HepG2 (cell line): ENCODE measurements at regions of chr2 and their contacts with region 1.

Region 1: GRCh38 chr2:100882645-100883613 is 63.0 kb downstream of the NPAS2 start:
- DNase-seq: peak; percentile 96
- ATAC-seq: peak; percentile 89
- H3K4me3 ChIP-seq: no peak overlapping the region
- H3K27ac ChIP-seq: peak overlapping the region; percentile 83
- H3K4me1 ChIP-seq: peaks cover 73% of the 10 kb centered on the region
- H3K27me3 ChIP-seq: no peaks in the 10 kb centered on the region
- CTCF ChIP-seq: no peak
- EP300 ChIP-seq: peak; percentile 82 to 90
- POLR2A ChIP-seq: peak in 1 of 2 experiments; percentile 33; a peak in 1 of 4 replicates
- RAD21 ChIP-seq: no peak

Region 2: GRCh38 chr2:100807707-100808106 is 75.2 kb before region 1 on chr2:
- CTCF ChIA-PET with region 1: no interaction called
- POLR2A ChIA-PET with region 1: no interaction called
- in situ Hi-C with region 1: no loop called
- intact Hi-C with region 1: no loop called
- DNase-seq: no peak
- ATAC-seq: no peak; the same call in 2 of the 3 replicates
- H3K4me3 ChIP-seq: no peak overlapping the region
- H3K27ac ChIP-seq: no peak overlapping the region
- H3K4me1 ChIP-seq: peaks cover 9% of the 10 kb centered on the region; the same call in 1 of the 2 replicates
- H3K27me3 ChIP-seq: peaks cover 2 to 25% of the 10 kb centered on the region in 2 experiments; a peak in 3 of 5 replicates
- CTCF ChIP-seq: no peak
- EP300 ChIP-seq: no peak
- POLR2A ChIP-seq: no peak
- RAD21 ChIP-seq: no peak

Region 3: GRCh38 chr2:100818606-100819369 is 64.1 kb before region 1 on chr2:
- CTCF ChIA-PET with region 1: no interaction called
- POLR2A ChIA-PET with region 1: interaction called, 6 read pairs
- in situ Hi-C with region 1: loop called (anchors 5 kb)
- intact Hi-C with region 1: no loop called
- DNase-seq: peak; percentile 78
- ATAC-seq: peak; percentile 71
- H3K4me3 ChIP-seq: peak overlapping the region; percentile 76 to 96 (median 87)
- H3K27ac ChIP-seq: peak overlapping the region; percentile 65
- H3K4me1 ChIP-seq: peaks cover 71% of the 10 kb centered on the region
- H3K27me3 ChIP-seq: no peaks in the 10 kb centered on the region; a peak in 1 of 5 replicates
- CTCF ChIP-seq: peak; percentile 81
- EP300 ChIP-seq: no peak; a peak in 1 of 4 replicates
- POLR2A ChIP-seq: peak; percentile 69 to 70
- RAD21 ChIP-seq: peak; percentile 85

Region 4: DNA sequence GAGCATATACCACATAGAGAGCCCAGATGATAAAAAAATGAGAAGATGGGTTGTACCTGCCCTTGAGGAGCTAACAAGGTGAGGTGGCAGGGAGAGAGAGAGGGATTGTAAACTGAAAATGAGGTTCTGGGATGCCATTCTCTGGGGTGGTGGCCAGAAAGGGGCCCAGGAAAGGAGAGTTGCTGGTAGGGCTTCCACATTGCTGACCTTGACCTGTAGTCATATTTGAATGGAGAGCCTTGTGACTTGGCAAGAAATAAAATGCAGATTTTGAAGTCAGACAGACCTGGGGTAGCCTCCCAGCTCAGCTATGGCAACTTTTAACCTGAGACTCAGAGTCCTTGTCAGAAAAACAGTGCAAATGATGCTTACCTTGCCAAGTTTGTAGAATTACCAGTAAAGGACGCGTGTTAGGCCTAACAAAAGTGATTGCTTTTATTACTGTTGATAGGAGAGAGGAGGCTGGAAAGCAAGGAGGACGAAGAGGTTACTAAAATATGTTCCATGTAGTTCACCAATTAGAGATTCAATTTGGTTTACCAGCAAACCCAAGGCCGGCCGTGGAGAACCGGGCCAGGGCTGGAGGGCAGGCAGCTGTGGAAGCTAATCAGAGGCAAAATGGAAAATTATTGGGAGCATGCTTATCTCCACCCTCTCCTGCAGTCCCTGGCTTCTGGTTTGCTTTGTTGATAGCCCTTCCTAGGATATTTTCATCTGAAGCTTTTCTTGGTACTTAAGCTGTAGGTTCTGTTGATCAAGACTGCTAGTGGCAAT is 59.1 kb before region 1 on chr2:
- CTCF ChIA-PET with region 1: no interaction called
- POLR2A ChIA-PET with region 1: interaction called, 6 read pairs
- in situ Hi-C with region 1: loop called (anchors 5 kb)
- intact Hi-C with region 1: loop called (anchors 1 kb)
- DNase-seq: peak; percentile 46
- ATAC-seq: no peak
- H3K4me3 ChIP-seq: no peak overlapping the region
- H3K27ac ChIP-seq: peak overlapping the region; percentile 71
- H3K4me1 ChIP-seq: peaks cover 73% of the 10 kb centered on the region
- H3K27me3 ChIP-seq: no peaks in the 10 kb centered on the region; a peak in 1 of 5 replicates
- CTCF ChIP-seq: no peak
- EP300 ChIP-seq: peak in 1 of 2 experiments; percentile 33; a peak in 1 of 4 replicates
- POLR2A ChIP-seq: no peak
- RAD21 ChIP-seq: no peak